HCT116 (cell line): ENCODE measurements at regions of chr12 and their contacts with region 1.

Region 1: DNA sequence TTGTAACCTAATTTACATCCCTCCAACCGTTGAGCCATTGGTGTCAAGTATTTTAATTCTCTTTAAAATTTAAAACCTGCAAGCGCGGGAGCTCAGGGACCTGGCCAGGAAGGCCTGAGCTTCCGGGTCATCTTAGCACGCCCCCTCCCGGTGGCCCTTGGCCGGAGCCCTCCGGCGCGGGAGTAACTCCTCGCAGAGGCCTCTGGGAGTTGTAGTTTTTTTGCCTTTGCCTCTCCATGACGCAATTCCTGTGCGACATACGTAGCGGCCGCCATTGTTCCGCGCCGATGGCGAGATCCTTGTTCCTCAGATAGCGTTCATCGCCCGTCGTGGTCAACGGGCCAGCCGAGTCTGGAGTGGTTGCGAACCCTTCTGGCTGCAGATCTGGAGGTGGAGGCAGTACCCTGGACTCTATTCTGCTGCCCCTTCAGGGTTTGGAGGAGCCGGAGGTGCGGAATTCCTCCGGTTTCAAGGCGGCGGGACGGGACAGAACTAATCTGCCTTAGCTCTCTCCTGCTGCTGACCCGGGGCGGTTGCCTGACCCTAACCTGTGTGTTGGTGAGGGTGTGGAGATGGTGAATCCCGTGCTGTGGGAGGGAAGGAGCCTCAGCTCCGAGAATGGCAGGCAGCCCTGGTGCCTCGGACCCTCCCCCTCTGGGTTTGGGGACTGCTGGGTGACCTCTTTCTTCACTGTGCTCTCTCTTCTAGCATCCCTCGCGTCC is at the start of gene ZNF268:
- DNase-seq: peak; percentile 85
- ATAC-seq: peak; percentile 96
- H3K4me3 ChIP-seq: peak within 1 kb of the TSS; percentile 77 to 83
- H3K27ac ChIP-seq: peak within 1 kb of the TSS; percentile 56
- H3K4me1 ChIP-seq: peaks cover 0 to 7% of the 10 kb centered on the region in 2 experiments; a peak in 1 of 4 replicates
- H3K27me3 ChIP-seq: no peaks in the 10 kb centered on the region
- CTCF ChIP-seq: peak; percentile 66 to 86 (median 67)
- POLR2A ChIP-seq: no peak
- RAD21 ChIP-seq: peak; percentile 56
- total RNA-seq, gene ZNF268: 12.2 TPM

Region 2: GRCh38 chr12:132771126-132771838 is 410.1 kb before region 1 on chr12:
- CTCF ChIA-PET with region 1: no interaction called
- POLR2A ChIA-PET with region 1: no interaction called
- RAD21 ChIA-PET with region 1: no interaction called
- intact Hi-C with region 1: loop called (anchors 1 kb)
- DNase-seq: no peak
- ATAC-seq: no peak
- H3K4me3 ChIP-seq: no peak overlapping the region
- H3K27ac ChIP-seq: no peak overlapping the region
- H3K4me1 ChIP-seq: peaks cover 3 to 11% of the 10 kb centered on the region in 2 experiments; a peak in 1 of 4 replicates
- H3K27me3 ChIP-seq: no peaks in the 10 kb centered on the region
- CTCF ChIP-seq: no peak
- POLR2A ChIP-seq: no peak
- RAD21 ChIP-seq: no peak

Region 3: GRCh38 chr12:133165776-133166175 is 15.6 kb before region 1 on chr12:
- CTCF ChIA-PET with region 1: no interaction called
- POLR2A ChIA-PET with region 1: no interaction called
- RAD21 ChIA-PET with region 1: no interaction called
- intact Hi-C with region 1: no loop called
- DNase-seq: no peak
- ATAC-seq: no peak
- H3K4me3 ChIP-seq: no peak overlapping the region
- H3K27ac ChIP-seq: no peak overlapping the region
- H3K4me1 ChIP-seq: no peaks in the 10 kb centered on the region
- H3K27me3 ChIP-seq: no peaks in the 10 kb centered on the region
- CTCF ChIP-seq: no peak
- POLR2A ChIP-seq: no peak
- RAD21 ChIP-seq: no peak

Region 4: GRCh38 chr12:133192847-133193246 is 11.4 kb after region 1 on chr12:
- CTCF ChIA-PET with region 1: no interaction called
- POLR2A ChIA-PET with region 1: no interaction called
- RAD21 ChIA-PET with region 1: no interaction called
- intact Hi-C with region 1: no loop called
- DNase-seq: no peak
- ATAC-seq: no peak
- H3K4me3 ChIP-seq: no peak overlapping the region
- H3K27ac ChIP-seq: no peak overlapping the region
- H3K4me1 ChIP-seq: no peaks in the 10 kb centered on the region
- H3K27me3 ChIP-seq: no peaks in the 10 kb centered on the region
- CTCF ChIP-seq: no peak
- POLR2A ChIP-seq: no peak
- RAD21 ChIP-seq: no peak